Heart right ventricle (tissue), 16 donors: ENCODE measurements at regions of chr10 and their contacts with region 1.

Region 1: DNA sequence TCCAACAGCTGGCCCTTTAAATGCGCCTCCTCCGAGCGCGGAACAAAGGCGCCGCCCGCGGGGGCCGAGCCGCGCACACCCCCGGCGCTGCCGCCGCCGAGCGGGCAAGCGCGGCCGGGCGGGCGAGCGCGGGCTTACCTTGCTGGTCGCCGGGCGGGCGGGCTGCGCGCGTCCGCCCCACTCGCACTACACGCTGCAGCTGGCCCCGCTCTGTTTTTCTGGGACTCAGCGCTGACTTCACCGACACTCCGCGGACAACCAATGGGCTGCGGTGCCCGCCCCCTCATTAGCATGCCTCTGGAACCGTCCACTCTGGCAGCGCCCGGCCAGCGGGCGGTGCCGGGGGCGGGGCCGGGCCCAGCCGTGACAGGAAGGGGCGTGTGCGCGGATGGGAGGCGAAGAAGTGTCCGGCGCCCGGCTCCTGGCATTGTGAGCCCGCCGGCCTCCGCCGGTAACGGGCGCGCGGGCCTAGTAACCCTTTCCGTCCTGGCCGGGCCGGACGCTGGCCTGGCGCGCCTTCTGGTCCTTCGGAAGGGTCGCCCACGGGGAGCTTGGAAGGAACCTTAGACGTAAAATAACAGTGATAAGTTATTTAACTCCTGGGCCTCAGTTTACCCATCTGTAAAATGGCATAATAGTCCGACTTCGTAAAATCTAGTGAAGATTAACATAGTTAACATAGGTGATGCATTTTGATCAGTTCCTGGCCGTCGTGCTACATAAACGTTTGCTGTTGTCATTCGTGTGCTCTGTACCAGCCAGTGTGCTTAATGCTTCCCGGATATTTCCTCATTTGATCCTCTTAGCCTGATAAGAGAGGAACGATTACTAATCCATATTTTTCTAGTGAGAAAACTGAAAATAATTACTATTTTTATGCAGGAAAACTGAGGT is at the start of gene SORBS1:
- DNase-seq: peak; percentile 96
- ATAC-seq: peak; percentile 97 to 99 (median 98)
- H3K4me3 ChIP-seq: peak within 1 kb of the TSS; percentile 85 to 99 (median 92)
- H3K27ac ChIP-seq: peak within 1 kb of the TSS; percentile 81 to 94 (median 90)
- H3K4me1 ChIP-seq: peaks cover 3 to 51% (median 27%) of the 10 kb centered on the region in 9 donors
- H3K27me3 ChIP-seq: peaks cover 0 to 8% (median 0%) of the 10 kb centered on the region in 7 donors
- CTCF ChIP-seq: no peak
- total RNA-seq, gene SORBS1: 528 to 1,253 (median 1,130) TPM

Region 2: GRCh38 chr10:95430231-95430951 is 131.0 kb before region 1 on chr10:
- intact Hi-C with region 1: loop called in 5 of 10 experiments (anchors 2 to 5 kb)
- DNase-seq: peak in 1 of 2 donors; percentile 59
- ATAC-seq: peak; percentile 71 to 80 (median 77)
- H3K4me3 ChIP-seq: no peak overlapping the region
- H3K27ac ChIP-seq: peak overlapping the region in 8 of 10 donors; percentile 50 to 95 (median 80)
- H3K4me1 ChIP-seq: peaks cover 46 to 100% (median 92%) of the 10 kb centered on the region in 9 donors
- H3K27me3 ChIP-seq: no peaks in the 10 kb centered on the region
- CTCF ChIP-seq: peak; percentile 94 to 98 (median 97)

Region 3: DNA sequence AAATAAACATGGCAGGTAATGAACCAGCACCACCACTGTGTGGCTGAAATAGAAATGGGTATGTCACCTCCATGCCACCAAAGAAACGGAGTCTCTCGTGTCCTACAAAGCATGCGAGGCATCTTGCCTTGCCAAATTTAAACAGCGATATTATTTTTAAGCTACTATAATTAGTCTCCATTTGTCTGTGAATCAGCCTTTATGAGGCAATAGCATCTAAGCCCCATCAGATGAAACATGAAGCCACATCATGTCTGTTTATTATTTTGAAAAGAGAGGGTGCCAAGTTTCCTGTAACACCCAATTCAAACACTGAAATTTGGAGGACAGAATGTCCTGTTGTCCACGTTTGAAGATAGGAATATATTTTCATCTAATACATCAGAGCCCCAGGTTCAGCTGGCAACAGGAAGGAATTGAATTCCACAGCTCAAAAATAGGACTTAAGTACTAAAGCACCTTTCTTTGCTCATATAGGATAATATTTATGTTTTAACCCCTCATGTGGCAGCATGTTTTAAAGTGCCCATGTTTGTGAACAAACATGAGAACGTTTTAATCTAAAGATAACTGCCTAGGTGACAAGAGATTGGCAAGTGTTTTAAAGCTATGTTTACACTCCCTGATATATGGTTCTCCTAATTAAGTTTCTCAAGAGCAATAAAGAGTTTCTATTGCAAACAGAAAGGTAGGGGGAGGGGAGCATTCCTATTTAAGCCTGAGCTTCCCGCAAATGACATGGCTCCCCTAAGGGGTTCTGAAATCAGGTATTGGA is 87.0 kb before region 1 on chr10:
- intact Hi-C with region 1: loop called in 4 of 10 experiments (anchors 2 to 10 kb)
- DNase-seq: peak in 1 of 2 donors; percentile 45
- ATAC-seq: peak; percentile 39 to 82 (median 68)
- H3K4me3 ChIP-seq: no peak overlapping the region
- H3K27ac ChIP-seq: peak overlapping the region; percentile 50 to 94 (median 90)
- H3K4me1 ChIP-seq: peaks cover 34 to 98% (median 78%) of the 10 kb centered on the region in 9 donors
- H3K27me3 ChIP-seq: no peaks in the 10 kb centered on the region
- CTCF ChIP-seq: peak in 2 of 9 donors; percentile 26 to 30

Region 4: GRCh38 chr10:95508730-95509129 is 52.7 kb before region 1 on chr10:
- intact Hi-C with region 1: loop called in 2 of 10 experiments (anchors 5 to 10 kb)
- DNase-seq: peak in 1 of 2 donors; percentile 51
- ATAC-seq: peak; percentile 65 to 86 (median 81)
- H3K4me3 ChIP-seq: peak overlapping the region in 6 of 10 donors; percentile 0 to 28 (median 14)
- H3K27ac ChIP-seq: peak overlapping the region; percentile 62 to 90 (median 82)
- H3K4me1 ChIP-seq: peaks cover 26 to 97% (median 82%) of the 10 kb centered on the region in 9 donors
- H3K27me3 ChIP-seq: no peaks in the 10 kb centered on the region
- CTCF ChIP-seq: no peak

Region 5: DNA sequence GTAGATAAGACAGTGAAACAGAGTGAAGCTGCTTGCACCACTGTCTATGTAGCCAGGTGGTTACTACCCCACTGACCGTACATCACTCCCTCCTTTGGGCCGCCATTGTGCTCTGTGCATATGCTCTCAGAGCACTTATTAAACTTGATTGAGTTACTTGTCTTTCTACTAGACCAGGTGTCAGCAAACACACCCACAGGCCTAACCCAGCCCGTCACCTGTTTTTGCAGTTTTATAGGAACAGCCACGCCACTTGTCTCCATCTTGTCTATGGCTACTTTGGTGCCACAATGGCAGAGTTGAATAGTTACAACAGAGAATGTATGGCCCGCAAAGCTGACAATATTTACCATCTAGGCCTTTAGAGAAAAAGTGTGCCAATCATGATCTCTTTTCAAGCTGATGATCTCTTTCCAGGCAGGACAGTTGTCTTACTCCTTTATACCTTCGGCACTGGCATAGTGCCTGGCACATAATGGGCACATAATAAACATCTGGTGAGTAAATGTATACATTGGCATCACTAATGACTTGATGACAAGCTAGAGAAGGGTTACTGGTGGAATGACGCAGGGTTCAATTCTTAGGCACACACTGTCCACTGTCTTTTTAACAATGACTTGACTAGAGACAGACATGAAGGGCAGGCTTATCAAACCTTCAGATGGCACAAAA is 36.9 kb before region 1 on chr10:
- intact Hi-C with region 1: loop called in 2 of 10 experiments (anchors 5 kb)
- DNase-seq: no peak
- ATAC-seq: no peak
- H3K4me3 ChIP-seq: no peak overlapping the region
- H3K27ac ChIP-seq: peak overlapping the region in 3 of 10 donors; percentile 9 to 50 (median 11)
- H3K4me1 ChIP-seq: peaks cover 9 to 96% (median 73%) of the 10 kb centered on the region in 9 donors
- H3K27me3 ChIP-seq: no peaks in the 10 kb centered on the region
- CTCF ChIP-seq: no peak